Breast epithelium (tissue), 4 donors: ENCODE measurements at regions of chr4 and their contacts with region 1.

Region 1: DNA sequence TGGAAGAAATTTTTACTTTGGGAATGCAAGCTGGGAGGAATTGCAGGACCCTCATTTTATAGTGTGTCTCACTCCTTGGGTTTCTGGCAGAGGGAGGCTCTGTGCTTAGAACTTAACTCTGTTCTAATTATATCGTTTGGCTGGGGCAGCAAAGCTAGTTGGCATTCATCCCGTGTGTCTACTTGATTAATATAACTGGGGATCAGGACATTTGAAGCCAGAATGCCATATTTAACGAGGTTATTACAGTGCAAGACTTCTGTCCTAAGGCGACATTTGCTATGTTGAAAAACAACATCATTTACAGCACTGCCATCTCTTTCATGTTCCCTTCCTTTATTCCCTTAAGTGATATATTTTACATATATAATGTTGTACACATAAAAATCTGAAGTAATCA is 179.1 kb upstream of the TBC1D9 start:
- DNase-seq: no peak
- H3K4me3 ChIP-seq: no peak overlapping the region
- H3K27ac ChIP-seq: no peak overlapping the region
- H3K4me1 ChIP-seq: no peaks in the 10 kb centered on the region
- H3K27me3 ChIP-seq: no peaks in the 10 kb centered on the region
- CTCF ChIP-seq: no peak
- POLR2A ChIP-seq: no peak

Region 2: GRCh38 chr4:141220655-141221605 is 285.7 kb after region 1 on chr4 and contains the start of gene ZNF330:
- intact Hi-C with region 1: no loop called
- DNase-seq: peak; percentile 84 to 91
- H3K4me3 ChIP-seq: peak within 1 kb of the TSS; percentile 73 to 96 (median 87)
- H3K27ac ChIP-seq: peak within 1 kb of the TSS; percentile 93 to 96
- H3K4me1 ChIP-seq: no peaks in the 10 kb centered on the region
- H3K27me3 ChIP-seq: no peaks in the 10 kb centered on the region
- CTCF ChIP-seq: peak in 1 of 3 donors; percentile 7
- POLR2A ChIP-seq: peak; percentile 93
- total RNA-seq, gene ZNF330: 27.5 to 68.0 (median 38.3) TPM

Region 3: DNA sequence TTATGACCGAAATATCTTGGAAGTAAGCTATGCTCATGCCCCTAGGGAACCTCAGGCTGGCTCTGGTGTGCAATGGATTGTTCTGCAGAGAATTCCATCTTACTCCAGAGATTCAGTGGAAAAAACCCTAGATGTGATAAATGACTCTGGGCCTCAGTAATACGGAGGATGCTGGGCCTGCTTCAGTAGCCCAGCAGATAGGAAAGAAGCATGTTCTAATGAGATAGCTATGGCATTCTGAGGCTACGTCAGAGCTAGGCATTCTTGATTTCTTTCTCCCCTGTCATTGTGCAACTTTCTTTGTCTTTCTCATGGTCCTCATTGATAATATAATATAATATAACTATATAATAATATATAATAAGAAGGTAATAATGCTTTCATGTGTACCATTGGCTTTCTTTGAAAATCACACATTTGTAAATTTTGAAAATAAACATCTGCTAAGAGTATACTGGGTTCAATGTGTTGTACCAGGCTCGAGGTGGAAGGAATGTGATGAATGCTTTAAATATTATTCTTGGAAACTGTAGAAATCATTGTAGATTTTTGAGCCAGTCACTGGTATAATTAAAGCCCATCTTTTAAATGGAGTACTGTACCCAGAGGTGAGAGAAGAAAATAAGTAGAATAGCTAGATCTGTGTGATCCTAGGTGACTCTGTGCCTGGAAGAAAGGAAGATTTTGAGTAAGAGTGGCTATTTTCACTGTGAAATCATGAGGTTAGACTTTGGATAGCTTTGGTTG is 853.1 kb after region 1 on chr4:
- intact Hi-C with region 1: loop called (anchors 10 kb)
- DNase-seq: no peak
- H3K4me3 ChIP-seq: no peak overlapping the region
- H3K27ac ChIP-seq: no peak overlapping the region
- H3K4me1 ChIP-seq: no peaks in the 10 kb centered on the region
- H3K27me3 ChIP-seq: no peaks in the 10 kb centered on the region
- CTCF ChIP-seq: no peak
- POLR2A ChIP-seq: no peak